ENCODE measurements at regions of chr3 and their contacts with region 1.

Region 1: GRCh38 chr3:106635271-106635670 is 742.0 kb upstream of the CCDC54 start:
- DNase-seq: peak; percentile 61
- H3K4me3 Mint-ChIP-seq: no peak overlapping the region
- H3K27ac Mint-ChIP-seq: peak overlapping the region; percentile 65
- H3K4me1 Mint-ChIP-seq: peaks cover 27% of the 10 kb centered on the region
- H3K27me3 Mint-ChIP-seq: no peaks in the 10 kb centered on the region
- CTCF ChIP-seq: no peak

Region 2: GRCh38 chr3:106728315-106729098 is 93.2 kb after region 1 on chr3:
- CTCF ChIA-PET with region 1: no interaction called
- POLR2A ChIA-PET with region 1: no interaction called
- intact Hi-C with region 1: loop called (anchors 5 kb)
- DNase-seq: peak; percentile 90
- H3K4me3 Mint-ChIP-seq: peak overlapping the region; percentile 55
- H3K27ac Mint-ChIP-seq: peak overlapping the region; percentile 97
- H3K4me1 Mint-ChIP-seq: peaks cover 32% of the 10 kb centered on the region
- H3K27me3 Mint-ChIP-seq: no peaks in the 10 kb centered on the region
- CTCF ChIP-seq: no peak

Region 3: GRCh38 chr3:106862067-106862466 is 226.8 kb after region 1 on chr3:
- CTCF ChIA-PET with region 1: no interaction called
- POLR2A ChIA-PET with region 1: no interaction called
- intact Hi-C with region 1: loop called (anchors 5 kb)
- DNase-seq: peak; percentile 27
- H3K4me3 Mint-ChIP-seq: no peak overlapping the region
- H3K27ac Mint-ChIP-seq: no peak overlapping the region
- H3K4me1 Mint-ChIP-seq: no peaks in the 10 kb centered on the region
- H3K27me3 Mint-ChIP-seq: no peaks in the 10 kb centered on the region
- CTCF ChIP-seq: no peak